Thyroid gland (tissue), 4 donors: ENCODE measurements at regions of chr19 and their contacts with region 1.

Region 1: DNA sequence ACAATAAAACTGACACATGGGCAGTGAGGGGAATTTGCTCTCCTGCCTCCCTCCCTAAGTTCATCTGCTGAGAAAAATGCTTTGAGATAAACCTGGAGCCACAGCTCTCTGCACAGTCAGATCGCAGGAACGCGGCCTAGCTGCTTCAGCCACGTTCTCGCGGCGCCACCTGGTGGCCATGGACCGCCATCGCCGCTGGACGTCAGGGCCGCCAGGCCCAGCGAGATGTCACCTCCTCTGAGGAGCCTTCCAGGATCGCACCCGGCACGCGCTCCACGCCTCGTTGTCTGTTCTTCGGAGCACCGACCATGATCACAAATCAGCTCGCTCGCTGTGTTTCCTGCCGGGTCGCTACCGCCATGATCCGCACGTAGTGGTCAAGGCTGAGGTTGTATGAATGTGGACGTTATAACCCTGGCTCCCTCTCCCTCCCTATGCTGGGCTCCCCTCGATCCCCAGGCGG is 20.6 kb upstream of the USP29 start:
- DNase-seq: peak; percentile 50 to 52
- H3K4me3 ChIP-seq: no peak overlapping the region
- H3K27ac ChIP-seq: no peak overlapping the region
- H3K4me1 ChIP-seq: no peaks in the 10 kb centered on the region
- H3K27me3 ChIP-seq: no peaks in the 10 kb centered on the region
- CTCF ChIP-seq: peak; percentile 64 to 79 (median 74)
- POLR2A ChIP-seq: no peak

Region 2: DNA sequence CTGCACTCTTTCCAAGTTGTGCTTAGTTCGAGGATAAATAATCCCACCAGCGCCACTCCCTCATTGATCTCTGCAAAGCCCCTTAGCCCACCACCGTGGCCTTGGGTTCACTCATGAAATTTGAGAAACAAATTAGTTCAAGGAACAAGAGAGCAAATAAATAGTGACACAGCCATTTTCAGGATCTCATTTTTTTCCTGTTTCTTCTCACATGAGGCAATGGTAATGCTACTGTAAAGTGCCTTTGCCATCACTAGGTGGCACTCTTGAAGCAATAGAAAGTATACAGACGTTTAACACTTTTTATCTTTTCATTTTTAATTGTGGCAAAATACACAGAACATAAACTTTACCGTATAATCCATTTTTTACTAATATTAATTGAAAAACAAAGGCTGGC is 350.9 kb before region 1 on chr19:
- intact Hi-C with region 1: loop called (anchors 10 kb)
- DNase-seq: peak; percentile 14 to 20
- H3K4me3 ChIP-seq: no peak overlapping the region
- H3K27ac ChIP-seq: no peak overlapping the region
- H3K4me1 ChIP-seq: no peaks in the 10 kb centered on the region
- H3K27me3 ChIP-seq: no peaks in the 10 kb centered on the region
- CTCF ChIP-seq: peak; percentile 36 to 73 (median 54)
- POLR2A ChIP-seq: no peak

Region 3: DNA sequence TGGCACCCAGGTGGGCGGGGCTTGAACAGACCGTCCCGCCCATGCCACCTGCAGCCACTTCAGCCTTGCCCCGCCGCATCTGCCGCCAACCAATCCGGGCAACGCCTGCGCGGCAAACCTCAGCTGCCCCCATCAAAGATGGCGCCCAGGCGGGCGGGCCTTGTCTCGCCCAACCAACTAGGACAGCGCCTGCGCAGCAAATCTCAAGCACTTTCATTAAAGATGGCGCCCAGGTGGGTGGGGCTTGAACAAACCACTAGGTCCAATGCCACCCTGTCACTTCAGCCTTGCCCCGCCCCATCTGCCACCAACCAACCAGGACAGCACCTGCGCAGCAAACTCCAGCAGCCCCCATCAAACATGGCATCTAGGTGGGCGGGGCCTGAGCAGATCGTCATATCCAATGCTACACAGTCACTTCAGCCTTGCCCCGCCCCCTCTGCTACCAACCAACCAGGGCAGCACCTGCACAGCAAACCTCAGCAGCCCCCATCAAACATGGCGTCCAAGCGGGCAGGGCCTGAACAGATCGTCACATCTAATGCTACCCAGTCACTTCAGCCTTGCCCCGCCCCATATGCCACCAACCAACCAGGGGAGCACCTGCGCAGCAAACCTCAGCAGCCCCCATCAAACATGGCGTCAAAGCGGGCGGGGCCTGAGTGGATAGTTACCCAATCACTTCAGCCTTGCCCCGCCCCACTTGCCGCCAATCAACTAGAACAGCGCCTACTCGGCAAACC is 260.1 kb before region 1 on chr19:
- intact Hi-C with region 1: no loop called
- DNase-seq: peak; percentile 100
- H3K4me3 ChIP-seq: peak overlapping the region in 1 of 3 donors; percentile 34
- H3K27ac ChIP-seq: peak overlapping the region in 2 of 3 donors; percentile 87 to 92
- H3K4me1 ChIP-seq: peaks cover 0 to 3% of the 10 kb centered on the region in 2 donors
- H3K27me3 ChIP-seq: no peaks in the 10 kb centered on the region
- CTCF ChIP-seq: no peak
- POLR2A ChIP-seq: no peak